ENCODE measurements at regions of chr1 and their contacts with region 1.

Region 1: GRCh38 chr1:237799762-237800474 is 90.8 kb downstream of the ZP4 start:
- DNase-seq: peak; percentile 37 to 42
- H3K4me3 ChIP-seq: no peak overlapping the region
- H3K27ac ChIP-seq: no peak overlapping the region
- H3K4me1 ChIP-seq: no peaks in the 10 kb centered on the region
- H3K27me3 ChIP-seq: no peaks in the 10 kb centered on the region
- CTCF ChIP-seq: peak; percentile 45

Region 2: DNA sequence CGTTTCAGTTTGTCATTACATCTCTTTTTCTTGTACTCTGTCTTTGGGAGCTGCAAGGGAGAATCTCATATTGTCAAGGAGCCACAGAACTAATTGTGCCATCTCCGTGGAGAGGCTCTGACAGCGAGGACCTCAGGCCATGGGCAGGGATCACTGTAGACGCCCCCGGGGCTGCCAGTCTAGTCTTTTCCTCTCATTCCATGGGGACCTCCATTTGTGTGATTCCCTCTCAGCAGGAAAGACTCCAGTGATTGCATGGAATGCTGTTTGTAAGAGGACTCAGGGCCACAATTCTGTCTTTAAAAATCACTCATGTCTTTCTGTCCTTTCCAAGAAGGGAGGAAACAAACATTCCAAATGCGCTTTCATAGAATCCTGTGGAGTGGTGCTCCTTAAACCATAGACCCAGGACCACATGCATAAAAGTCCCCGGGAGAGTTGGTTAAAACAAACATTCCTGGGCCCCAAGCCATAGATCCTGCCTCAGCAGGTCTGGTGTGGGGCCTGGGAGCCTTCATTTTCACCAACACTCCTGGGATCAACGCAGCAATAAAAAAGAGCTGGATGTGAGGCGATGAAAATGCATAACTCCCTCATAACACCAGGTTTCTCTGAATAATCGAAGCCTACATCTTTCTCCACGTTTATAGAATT is 13.7 kb before region 1 on chr1:
- CTCF ChIA-PET with region 1: interaction called, 11 read pairs
- POLR2A ChIA-PET with region 1: no interaction called
- intact Hi-C with region 1: no loop called
- DNase-seq: no peak
- H3K4me3 ChIP-seq: no peak overlapping the region
- H3K27ac ChIP-seq: no peak overlapping the region
- H3K4me1 ChIP-seq: no peaks in the 10 kb centered on the region
- H3K27me3 ChIP-seq: peaks cover 30% of the 10 kb centered on the region
- CTCF ChIP-seq: no peak

Region 3: DNA sequence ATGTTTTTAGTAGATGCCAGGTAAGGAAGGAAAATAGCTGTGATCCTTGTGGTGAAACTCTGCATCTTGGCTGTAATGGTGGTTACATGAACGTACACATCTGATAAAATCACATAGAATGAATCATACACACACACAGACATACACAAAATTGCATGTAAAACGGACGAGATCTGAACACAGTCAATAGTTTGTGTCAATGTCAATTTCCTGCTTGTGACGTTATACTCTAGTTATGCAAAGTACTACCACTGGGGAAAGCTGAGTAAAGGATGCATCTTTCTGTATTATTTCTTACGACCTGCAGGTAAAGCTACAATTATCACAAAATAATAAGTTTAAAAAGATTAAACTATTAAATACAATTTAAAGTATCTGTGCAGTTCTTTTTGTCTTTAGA is 584.5 kb after region 1 on chr1:
- CTCF ChIA-PET with region 1: interaction called, 10 read pairs
- POLR2A ChIA-PET with region 1: no interaction called
- intact Hi-C with region 1: no loop called
- DNase-seq: no peak
- H3K4me3 ChIP-seq: no peak overlapping the region
- H3K27ac ChIP-seq: no peak overlapping the region
- H3K4me1 ChIP-seq: no peaks in the 10 kb centered on the region
- H3K27me3 ChIP-seq: no peaks in the 10 kb centered on the region
- CTCF ChIP-seq: no peak

Measured in PC-9 (cell line).